Tibial artery (tissue), 4 donors: ENCODE measurements at regions of chr12 and their contacts with region 1.

Region 1: GRCh38 chr12:103877934-103878510 is 37.0 kb upstream of the NT5DC3 start:
- DNase-seq: peak in 1 of 2 donors; percentile 36
- H3K4me3 ChIP-seq: no peak overlapping the region
- H3K27ac ChIP-seq: no peak overlapping the region
- H3K4me1 ChIP-seq: no peaks in the 10 kb centered on the region
- H3K27me3 ChIP-seq: no peaks in the 10 kb centered on the region
- CTCF ChIP-seq: peak; percentile 57 to 61

Region 2: GRCh38 chr12:103571286-103571685 is 306.7 kb before region 1 on chr12:
- intact Hi-C with region 1: loop called (anchors 10 kb)
- DNase-seq: no peak
- H3K4me3 ChIP-seq: no peak overlapping the region
- H3K27ac ChIP-seq: no peak overlapping the region
- H3K4me1 ChIP-seq: peaks cover 0 to 10% (median 7%) of the 10 kb centered on the region in 4 donors
- H3K27me3 ChIP-seq: peaks cover 0 to 26% of the 10 kb centered on the region in 2 donors
- CTCF ChIP-seq: no peak

Region 3: DNA sequence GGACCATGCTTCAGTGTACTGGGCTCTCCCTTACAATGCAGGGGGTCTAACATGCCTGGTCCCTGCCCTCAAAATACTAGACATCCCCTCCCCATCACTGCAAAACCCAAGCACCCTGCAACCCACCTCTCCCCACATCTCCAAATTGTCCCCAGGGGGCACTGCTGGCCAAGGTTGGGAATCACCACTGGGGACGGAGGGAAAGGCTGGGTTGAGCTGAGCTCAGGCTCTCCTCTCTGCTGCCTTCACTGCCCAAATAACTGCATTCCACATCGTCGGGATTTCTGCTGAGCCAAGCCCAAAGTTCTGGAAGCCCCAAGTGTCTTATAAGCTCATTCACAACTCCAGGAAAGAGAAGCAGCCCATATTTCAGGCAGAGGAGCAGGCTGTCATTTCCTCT is 106.6 kb before region 1 on chr12:
- intact Hi-C with region 1: loop called (anchors 5 kb)
- DNase-seq: peak in 1 of 2 donors; percentile 40
- H3K4me3 ChIP-seq: no peak overlapping the region
- H3K27ac ChIP-seq: peak overlapping the region in 1 of 2 donors; percentile 19
- H3K4me1 ChIP-seq: peaks cover 0 to 30% (median 21%) of the 10 kb centered on the region in 4 donors
- H3K27me3 ChIP-seq: no peaks in the 10 kb centered on the region
- CTCF ChIP-seq: peak; percentile 49 to 53

Region 4: DNA sequence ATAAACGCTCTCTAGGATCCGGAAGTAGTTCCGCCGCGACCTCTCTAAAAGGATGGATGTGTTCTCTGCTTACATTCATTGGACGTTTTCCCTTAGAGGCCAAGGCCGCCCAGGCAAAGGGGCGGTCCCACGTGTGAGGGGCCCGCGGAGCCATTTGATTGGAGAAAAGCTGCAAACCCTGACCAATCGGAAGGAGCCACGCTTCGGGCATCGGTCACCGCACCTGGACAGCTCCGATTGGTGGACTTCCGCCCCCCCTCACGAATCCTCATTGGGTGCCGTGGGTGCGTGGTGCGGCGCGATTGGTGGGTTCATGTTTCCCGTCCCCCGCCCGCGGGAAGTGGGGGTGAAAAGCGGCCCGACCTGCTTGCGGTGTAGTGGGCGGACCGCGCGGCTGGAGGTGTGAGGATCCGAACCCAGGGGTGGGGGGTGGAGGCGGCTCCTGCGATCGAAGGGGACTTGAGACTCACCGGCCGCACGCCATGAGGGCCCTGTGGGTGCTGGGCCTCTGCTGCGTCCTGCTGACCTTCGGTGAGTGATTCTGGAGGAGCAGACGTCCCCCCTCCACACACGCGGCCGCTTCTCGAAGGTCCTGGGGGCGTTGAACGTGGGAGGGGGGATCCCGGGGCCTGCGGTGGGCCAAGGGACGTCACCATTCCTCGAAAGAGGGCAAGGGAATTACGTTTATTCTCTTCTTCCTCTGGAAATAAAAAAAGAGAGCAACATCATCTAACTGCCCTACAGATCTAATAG is 52.2 kb after region 1 on chr12 and contains the start of gene HSP90B1:
- intact Hi-C with region 1: loop called (anchors 10 kb)
- DNase-seq: peak; percentile 99 to 100
- H3K4me3 ChIP-seq: peak within 1 kb of the TSS; percentile 79 to 89
- H3K27ac ChIP-seq: peak within 1 kb of the TSS; percentile 91 to 96
- H3K4me1 ChIP-seq: peaks cover 0 to 51% (median 33%) of the 10 kb centered on the region in 4 donors
- H3K27me3 ChIP-seq: no peaks in the 10 kb centered on the region
- CTCF ChIP-seq: peak in 1 of 2 experiments; percentile 40

Region 5: DNA sequence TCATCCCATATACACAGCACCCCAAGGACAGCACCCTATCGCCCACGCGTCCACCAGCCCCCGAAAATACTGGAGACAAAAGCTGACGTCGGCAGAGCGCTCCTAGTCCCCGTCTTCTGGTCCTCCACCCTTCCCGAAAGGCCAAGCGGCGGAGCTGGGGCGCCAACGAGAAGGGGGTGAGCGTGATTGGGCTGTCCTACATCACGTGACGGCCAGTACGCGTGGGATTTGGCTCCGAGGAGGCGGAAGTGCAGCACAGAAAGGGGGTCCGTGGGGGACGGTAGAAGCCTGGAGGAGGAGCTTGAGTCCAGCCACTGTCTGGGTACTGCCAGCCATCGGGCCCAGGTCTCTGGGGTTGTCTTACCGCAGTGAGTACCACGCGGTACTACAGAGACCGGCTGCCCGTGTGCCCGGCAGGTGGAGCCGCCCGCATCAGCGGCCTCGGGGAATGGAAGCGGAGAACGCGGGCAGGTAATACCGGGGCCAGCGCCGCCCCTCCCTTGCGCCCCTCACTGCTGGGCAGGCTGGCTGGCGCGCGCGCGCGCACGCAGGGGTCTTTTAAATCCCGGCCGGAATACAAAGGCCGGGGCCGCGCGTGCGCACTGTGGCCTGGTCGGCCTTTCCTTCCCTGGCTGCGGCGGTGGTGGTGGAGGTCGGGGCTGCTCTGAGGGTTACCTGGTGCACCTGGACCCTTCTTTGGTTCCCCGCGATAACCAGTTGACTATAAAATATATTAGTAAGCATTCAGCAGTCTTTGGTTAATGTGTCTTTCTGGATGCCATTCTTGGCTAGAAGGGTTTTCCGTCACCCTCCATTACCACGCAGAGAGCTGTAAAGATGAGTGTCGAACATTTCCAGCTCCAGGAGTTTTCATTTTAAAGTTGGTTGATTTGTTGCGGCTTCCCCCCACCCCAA is 87.8 kb after region 1 on chr12 and contains the start of gene TDG:
- intact Hi-C with region 1: loop called (anchors 5 kb)
- DNase-seq: peak; percentile 99
- H3K4me3 ChIP-seq: peak within 1 kb of the TSS; percentile 94 to 96
- H3K27ac ChIP-seq: peak within 1 kb of the TSS; percentile 97 to 98
- H3K4me1 ChIP-seq: peaks cover 0 to 56% (median 40%) of the 10 kb centered on the region in 4 donors
- H3K27me3 ChIP-seq: no peaks in the 10 kb centered on the region
- CTCF ChIP-seq: peak in 1 of 2 experiments; percentile 9